Activated CD8-positive, alpha-beta memory T cell treated with anti-CD3 and anti-CD28 coated beads, Interleukin-2, amount 10 ng/mL, durations not matched to agents 7 days and 5 days (primary cell): ENCODE measurements at regions of chr10 and their contacts with region 1.

Region 1: DNA sequence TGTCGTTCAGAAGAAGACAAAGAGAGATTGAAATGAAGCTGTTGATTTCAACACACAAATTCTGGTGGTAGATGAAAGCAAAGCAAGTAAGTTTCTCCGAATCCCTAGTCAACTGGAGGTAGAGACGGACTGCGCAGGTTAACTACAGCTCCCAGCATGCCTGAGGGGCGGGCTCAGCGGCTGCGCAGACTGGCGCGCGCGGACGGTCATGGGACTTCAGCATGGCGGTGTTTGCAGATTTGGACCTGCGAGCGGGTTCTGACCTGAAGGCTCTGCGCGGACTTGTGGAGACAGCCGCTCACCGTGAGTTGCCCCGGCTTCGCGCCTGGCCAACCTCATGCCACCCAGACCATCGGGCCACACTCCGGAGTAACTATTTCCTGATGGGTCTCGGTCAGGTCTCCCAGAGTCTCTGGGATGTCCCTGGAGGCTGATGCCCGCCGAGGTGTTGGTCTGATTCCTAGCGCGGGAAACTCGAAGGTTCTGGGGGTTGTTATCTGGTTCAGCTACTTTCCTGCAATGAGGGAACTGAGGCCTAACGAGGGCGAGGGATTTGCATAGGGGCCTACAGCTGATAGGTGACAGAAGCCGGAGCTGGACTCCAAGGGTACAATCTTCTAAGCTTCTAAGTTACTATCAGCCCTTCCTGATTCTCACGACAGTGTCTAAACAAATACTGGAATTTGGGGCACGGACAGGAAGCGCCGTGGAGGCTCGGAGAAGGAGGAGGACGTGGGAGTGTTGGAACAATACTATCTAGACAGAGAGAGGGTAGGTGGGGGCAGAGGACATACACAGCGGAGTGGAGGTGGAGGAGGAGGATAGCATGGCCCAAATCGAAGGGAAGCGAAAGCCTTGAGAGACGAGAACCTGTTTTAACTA is at the start of gene RPP30:
- DNase-seq: peak; percentile 90
- ATAC-seq: peak; percentile 98
- H3K4me3 Mint-ChIP-seq: peak within 1 kb of the TSS; percentile 91
- H3K27ac Mint-ChIP-seq: peak within 1 kb of the TSS; percentile 92
- H3K4me1 Mint-ChIP-seq: peaks cover 40% of the 10 kb centered on the region
- H3K27me3 Mint-ChIP-seq: peaks cover 27% of the 10 kb centered on the region
- total RNA-seq, gene RPP30: 43.0 to 48.8 TPM

Region 2: GRCh38 chr10:90857635-90858460 is 14.2 kb before region 1 on chr10 and contains the start of gene HTR7:
- CTCF ChIA-PET with region 1: interaction called, 19 read pairs
- DNase-seq: peak; percentile 61
- ATAC-seq: peak; percentile 89
- H3K4me3 Mint-ChIP-seq: peak within 1 kb of the TSS; percentile 81
- H3K27ac Mint-ChIP-seq: peak within 1 kb of the TSS; percentile 32
- H3K4me1 Mint-ChIP-seq: peaks cover 8% of the 10 kb centered on the region
- H3K27me3 Mint-ChIP-seq: peaks cover 77% of the 10 kb centered on the region
- total RNA-seq, gene HTR7: not detected

Region 3: GRCh38 chr10:90905925-90906324 is 33.9 kb after region 1 on chr10:
- CTCF ChIA-PET with region 1: no interaction called
- DNase-seq: no peak
- ATAC-seq: peak; percentile 63
- H3K4me3 Mint-ChIP-seq: no peak overlapping the region
- H3K27ac Mint-ChIP-seq: peak overlapping the region; percentile 70
- H3K4me1 Mint-ChIP-seq: peaks cover 21% of the 10 kb centered on the region
- H3K27me3 Mint-ChIP-seq: no peaks in the 10 kb centered on the region